Activated CD4-positive, alpha-beta memory T cell treated with anti-CD3 and anti-CD28 coated beads, Interleukin-2, amount 10 ng/mL, durations not matched to agents 7 days and 5 days (primary cell): ENCODE measurements at regions of chr12 and their contacts with region 1.

Region 1: DNA sequence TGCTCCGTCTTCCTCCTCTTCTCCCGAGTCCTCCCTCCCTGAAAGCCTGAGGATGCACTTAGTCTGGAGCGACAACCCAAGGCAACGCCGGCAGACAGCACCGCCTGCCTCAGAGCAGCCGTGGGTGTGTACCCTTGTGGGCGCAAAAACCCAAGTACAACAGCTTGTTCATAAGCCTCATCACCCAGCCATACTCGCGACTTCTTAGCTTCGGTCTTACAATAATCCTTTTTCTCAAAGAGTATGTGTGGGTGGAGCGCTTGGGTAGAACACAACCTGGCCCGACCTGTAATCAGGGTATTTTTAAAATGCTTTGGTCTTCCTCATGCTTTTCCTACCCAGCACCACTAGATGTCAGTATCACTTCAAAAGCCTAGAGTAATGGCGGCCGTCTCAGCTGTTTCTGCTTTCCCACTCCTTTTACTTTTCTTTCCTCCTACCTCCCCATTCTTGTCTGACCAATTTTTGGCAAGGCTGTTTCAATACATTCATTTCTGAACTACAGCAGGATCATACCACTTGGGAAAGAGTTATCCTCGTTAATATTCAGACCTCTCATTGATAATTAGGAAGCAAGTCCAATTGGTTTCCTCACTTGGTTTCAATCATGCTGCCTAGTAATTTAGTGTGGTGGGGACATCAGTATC is 198.9 kb downstream of the EPS8 start:
- DNase-seq: peak; percentile 53
- H3K4me3 Mint-ChIP-seq: peak overlapping the region; percentile 53
- H3K27ac Mint-ChIP-seq: peak overlapping the region; percentile 1
- H3K4me1 Mint-ChIP-seq: peaks cover 11% of the 10 kb centered on the region
- H3K27me3 Mint-ChIP-seq: no peaks in the 10 kb centered on the region

Region 2: DNA sequence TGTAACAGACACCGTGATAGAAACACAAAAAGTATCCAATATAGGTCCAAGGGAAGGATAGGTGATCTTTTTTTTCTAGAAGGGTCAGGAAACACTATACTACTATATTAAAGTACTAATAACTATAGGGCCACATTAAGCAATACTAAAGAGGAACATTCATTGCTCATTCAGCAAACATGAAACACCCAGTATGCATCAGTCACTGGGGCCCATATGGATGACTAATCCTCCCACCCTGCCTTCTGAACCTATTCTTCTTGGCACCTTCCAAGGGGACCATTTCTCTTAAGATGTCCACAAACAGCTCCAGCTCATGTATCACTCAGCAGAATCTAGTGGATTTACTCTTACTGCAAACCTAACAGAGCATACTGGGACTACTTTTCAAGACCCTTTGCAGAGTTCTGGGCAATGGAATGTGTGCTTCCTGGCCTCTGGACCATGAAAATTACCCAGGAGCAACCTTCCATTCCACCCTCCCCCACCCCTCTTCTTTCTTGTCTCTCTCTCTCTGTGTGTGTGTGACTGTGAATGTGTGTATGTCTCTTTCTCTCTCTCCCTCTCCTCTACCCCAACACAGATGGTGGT is 11.0 kb after region 1 on chr12:
- CTCF ChIA-PET with region 1: no interaction called
- POLR2A ChIA-PET with region 1: no interaction called
- DNase-seq: no peak
- H3K4me3 Mint-ChIP-seq: no peak overlapping the region
- H3K27ac Mint-ChIP-seq: no peak overlapping the region
- H3K4me1 Mint-ChIP-seq: no peaks in the 10 kb centered on the region
- H3K27me3 Mint-ChIP-seq: no peaks in the 10 kb centered on the region

Region 3: DNA sequence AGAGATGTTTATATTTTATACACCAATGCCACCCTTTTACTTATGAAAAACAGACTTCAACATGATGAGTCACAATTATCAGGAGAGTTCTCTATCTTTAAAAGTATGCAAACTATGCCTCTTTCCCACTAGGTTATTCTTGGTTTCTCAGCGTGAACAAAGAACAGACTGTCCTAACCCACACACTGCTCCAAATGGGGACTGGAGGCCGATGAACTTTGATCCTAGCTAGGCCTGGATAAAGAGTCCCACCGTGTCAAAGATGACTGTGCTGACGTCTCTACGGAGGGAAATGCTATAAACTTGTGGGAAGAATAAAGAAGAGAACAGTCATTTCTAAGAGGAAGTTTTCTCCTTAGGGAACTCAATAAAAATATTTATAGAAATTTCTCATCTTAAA is 38.8 kb after region 1 on chr12:
- CTCF ChIA-PET with region 1: no interaction called
- POLR2A ChIA-PET with region 1: no interaction called
- DNase-seq: no peak
- H3K4me3 Mint-ChIP-seq: no peak overlapping the region
- H3K27ac Mint-ChIP-seq: no peak overlapping the region
- H3K4me1 Mint-ChIP-seq: no peaks in the 10 kb centered on the region
- H3K27me3 Mint-ChIP-seq: peaks cover 3% of the 10 kb centered on the region

Region 4: GRCh38 chr12:15856097-15856982 is 266.0 kb after region 1 on chr12:
- CTCF ChIA-PET with region 1: interaction called, 69 read pairs
- POLR2A ChIA-PET with region 1: no interaction called
- DNase-seq: peak; percentile 38
- H3K4me3 Mint-ChIP-seq: no peak overlapping the region
- H3K27ac Mint-ChIP-seq: no peak overlapping the region
- H3K4me1 Mint-ChIP-seq: no peaks in the 10 kb centered on the region
- H3K27me3 Mint-ChIP-seq: peaks cover 16% of the 10 kb centered on the region